ENCODE measurements at regions of chr11 and their contacts with region 1.

Region 1: DNA sequence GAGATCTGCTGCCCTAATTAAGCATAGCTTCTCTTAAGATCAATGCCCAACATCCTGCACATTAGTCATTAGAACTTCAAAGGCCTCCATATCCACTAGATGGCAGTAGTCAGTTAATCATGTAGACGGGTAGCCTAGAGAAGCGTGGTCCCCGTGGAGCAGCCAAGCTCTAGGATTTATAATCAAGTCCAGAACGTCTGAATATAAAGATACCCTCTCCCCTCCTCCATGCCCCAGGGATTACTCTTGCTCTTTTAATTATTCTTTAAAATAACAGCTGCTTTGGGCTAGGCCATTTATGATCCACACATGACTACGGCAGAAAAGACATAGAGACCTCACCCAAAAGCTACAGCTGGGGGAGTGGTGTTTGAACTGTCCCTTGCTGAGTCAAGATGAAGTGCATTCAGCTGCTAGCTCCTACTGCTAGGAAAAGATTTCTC is 327.6 kb upstream of the PLET1 start:
- DNase-seq: peak; percentile 46
- ATAC-seq: peak; percentile 88
- H3K4me3 Mint-ChIP-seq: no peak overlapping the region
- H3K27ac Mint-ChIP-seq: no peak overlapping the region
- H3K4me1 Mint-ChIP-seq: peaks cover 46% of the 10 kb centered on the region
- H3K27me3 Mint-ChIP-seq: peaks cover 15% of the 10 kb centered on the region
- CTCF ChIP-seq: peak; percentile 53

Region 2: DNA sequence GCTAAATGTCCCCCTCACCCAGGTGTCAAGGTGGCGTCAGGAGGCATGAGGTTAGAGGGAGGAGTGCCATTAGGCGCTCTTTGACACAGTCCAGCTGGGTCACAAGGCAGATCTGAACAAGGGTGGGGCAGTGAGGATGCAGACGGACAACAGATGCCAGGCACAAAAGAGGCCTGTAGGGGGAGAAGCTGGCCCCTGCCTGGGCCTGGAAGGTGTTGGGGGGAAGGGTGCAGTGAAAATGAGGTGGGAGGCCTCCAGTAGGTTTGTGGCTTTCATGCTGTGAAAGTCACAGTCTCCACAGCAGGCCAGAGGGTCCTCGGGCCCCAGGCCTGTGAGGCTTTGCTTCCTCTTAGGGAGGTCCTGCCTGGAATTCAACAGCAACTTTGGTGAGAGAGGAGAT is 242.6 kb before region 1 on chr11:
- CTCF ChIA-PET with region 1: interaction called, 10 read pairs
- POLR2A ChIA-PET with region 1: no interaction called
- DNase-seq: peak; percentile 42
- ATAC-seq: peak; percentile 91
- H3K4me3 Mint-ChIP-seq: no peak overlapping the region
- H3K27ac Mint-ChIP-seq: no peak overlapping the region
- H3K4me1 Mint-ChIP-seq: peaks cover 6% of the 10 kb centered on the region
- H3K27me3 Mint-ChIP-seq: no peaks in the 10 kb centered on the region; the same call in 1 of the 2 replicates
- CTCF ChIP-seq: 0 out of 2 replicates have a peak, but pooled peaks have one; percentile 16

Region 3: DNA sequence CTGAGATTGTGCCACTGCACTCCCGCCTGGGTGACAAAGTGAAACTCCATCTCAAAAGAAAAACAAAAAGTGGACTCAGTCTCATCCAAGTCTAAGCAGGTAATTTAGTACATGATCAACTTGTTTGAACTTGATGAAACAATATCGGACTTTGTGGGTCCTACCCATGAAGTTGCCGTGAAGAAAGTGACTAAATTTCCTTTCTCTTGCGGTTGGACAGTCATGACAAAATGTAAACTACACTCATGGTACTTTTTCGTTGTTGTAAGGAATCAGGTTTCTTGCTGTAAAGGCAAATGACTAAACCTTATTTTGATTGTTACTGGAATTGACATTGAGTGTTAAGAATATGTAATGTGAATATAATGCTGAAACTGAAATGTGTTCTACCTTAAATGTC is 163.2 kb before region 1 on chr11:
- CTCF ChIA-PET with region 1: no interaction called
- POLR2A ChIA-PET with region 1: no interaction called
- DNase-seq: no peak
- ATAC-seq: no peak
- H3K4me3 Mint-ChIP-seq: no peak overlapping the region
- H3K27ac Mint-ChIP-seq: no peak overlapping the region
- H3K4me1 Mint-ChIP-seq: peaks cover 13% of the 10 kb centered on the region
- H3K27me3 Mint-ChIP-seq: no peaks in the 10 kb centered on the region
- CTCF ChIP-seq: no peak

Region 4: DNA sequence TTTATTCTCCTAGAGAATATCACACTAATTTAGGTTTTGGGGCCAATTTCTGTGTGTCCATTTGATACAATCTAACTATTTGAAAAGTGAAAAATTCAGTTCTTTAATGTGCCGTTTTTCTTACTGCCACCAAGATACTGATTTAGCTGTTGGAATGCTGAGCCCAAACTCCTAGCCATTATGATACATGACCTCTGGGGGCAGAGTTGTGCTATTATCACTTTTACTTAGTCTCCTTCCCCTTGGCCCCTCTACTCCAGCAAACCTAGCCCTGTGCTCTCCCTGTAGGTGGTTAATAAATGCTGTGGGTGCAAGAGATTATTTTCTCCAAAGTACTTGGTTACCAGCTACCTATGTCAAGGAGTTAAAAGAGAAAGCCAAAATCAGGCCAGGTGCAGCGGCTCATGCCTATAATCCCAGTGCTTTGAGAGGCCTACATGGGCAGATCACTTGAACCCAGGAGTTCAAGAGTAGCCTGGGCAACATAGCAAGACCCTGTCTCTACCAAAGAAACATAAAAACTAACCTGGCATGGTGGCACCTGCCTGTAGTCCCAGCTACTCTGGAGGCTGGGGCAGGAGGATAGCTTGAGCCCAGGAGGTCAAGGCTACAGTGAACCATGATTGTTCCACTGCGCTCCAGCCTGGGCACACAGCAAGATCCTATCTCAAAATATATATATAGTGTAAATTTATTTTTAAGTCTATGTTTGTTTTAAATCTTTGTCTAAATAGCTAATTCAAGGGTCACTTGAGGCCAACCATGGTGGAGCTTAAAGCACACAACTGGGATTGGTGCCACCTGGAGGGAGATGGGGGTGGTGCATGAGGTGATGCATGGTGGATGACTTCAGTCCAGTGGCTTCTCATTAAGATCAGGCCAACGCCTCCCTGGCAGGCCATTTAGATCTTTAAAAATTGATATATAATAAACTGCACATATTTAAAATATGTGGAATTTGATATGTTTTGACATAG is 134.4 kb before region 1 on chr11:
- CTCF ChIA-PET with region 1: interaction called, 19 read pairs
- POLR2A ChIA-PET with region 1: no interaction called
- DNase-seq: peak; percentile 67
- ATAC-seq: peak; percentile 84
- H3K4me3 Mint-ChIP-seq: no peak overlapping the region
- H3K27ac Mint-ChIP-seq: no peak overlapping the region
- H3K4me1 Mint-ChIP-seq: peaks cover 9% of the 10 kb centered on the region
- H3K27me3 Mint-ChIP-seq: peaks cover 21% of the 10 kb centered on the region
- CTCF ChIP-seq: peak; percentile 18; the same call in 1 of the 2 replicates

Region 5: GRCh38 chr11:112650527-112650926 is 62.3 kb after region 1 on chr11:
- CTCF ChIA-PET with region 1: interaction called, 13 read pairs
- POLR2A ChIA-PET with region 1: no interaction called
- DNase-seq: no peak
- ATAC-seq: no peak
- H3K4me3 Mint-ChIP-seq: no peak overlapping the region
- H3K27ac Mint-ChIP-seq: no peak overlapping the region
- H3K4me1 Mint-ChIP-seq: peaks cover 15% of the 10 kb centered on the region
- H3K27me3 Mint-ChIP-seq: no peaks in the 10 kb centered on the region
- CTCF ChIP-seq: no peak

Region 6: GRCh38 chr11:112795142-112795815 is 207.0 kb after region 1 on chr11:
- CTCF ChIA-PET with region 1: interaction called, 90 read pairs
- POLR2A ChIA-PET with region 1: no interaction called
- DNase-seq: peak; percentile 67
- ATAC-seq: peak; percentile 60
- H3K4me3 Mint-ChIP-seq: no peak overlapping the region
- H3K27ac Mint-ChIP-seq: no peak overlapping the region
- H3K4me1 Mint-ChIP-seq: peaks cover 50% of the 10 kb centered on the region
- H3K27me3 Mint-ChIP-seq: no peaks in the 10 kb centered on the region; the same call in 1 of the 2 replicates
- CTCF ChIP-seq: peak; percentile 70

Region 7: GRCh38 chr11:113113801-113114706 is 525.8 kb after region 1 on chr11:
- CTCF ChIA-PET with region 1: interaction called, 28 read pairs
- POLR2A ChIA-PET with region 1: no interaction called
- DNase-seq: peak; percentile 62
- ATAC-seq: peak; percentile 99
- H3K4me3 Mint-ChIP-seq: no peak overlapping the region
- H3K27ac Mint-ChIP-seq: no peak overlapping the region
- H3K4me1 Mint-ChIP-seq: peaks cover 5% of the 10 kb centered on the region
- H3K27me3 Mint-ChIP-seq: no peaks in the 10 kb centered on the region
- CTCF ChIP-seq: peak; percentile 33; the same call in 1 of the 2 replicates

Region 8: GRCh38 chr11:113289431-113290187 is 701.3 kb after region 1 on chr11:
- CTCF ChIA-PET with region 1: interaction called, 65 read pairs
- POLR2A ChIA-PET with region 1: interaction called, 3 read pairs
- DNase-seq: peak; percentile 81
- ATAC-seq: peak; percentile 98
- H3K4me3 Mint-ChIP-seq: no peak overlapping the region
- H3K27ac Mint-ChIP-seq: no peak overlapping the region
- H3K4me1 Mint-ChIP-seq: peaks cover 5% of the 10 kb centered on the region
- H3K27me3 Mint-ChIP-seq: no peaks in the 10 kb centered on the region; the same call in 1 of the 2 replicates
- CTCF ChIP-seq: peak; percentile 86